ENCODE measurements at regions of chr2 and their contacts with region 1.

Region 1: GRCh38 chr2:72603481-72603880 is 222.4 kb downstream of the EXOC6B start:
- DNase-seq: no peak
- H3K4me3 ChIP-seq: no peak overlapping the region
- H3K27ac ChIP-seq: no peak overlapping the region
- H3K27me3 ChIP-seq: no peaks in the 10 kb centered on the region
- CTCF ChIP-seq: no peak

Region 2: DNA sequence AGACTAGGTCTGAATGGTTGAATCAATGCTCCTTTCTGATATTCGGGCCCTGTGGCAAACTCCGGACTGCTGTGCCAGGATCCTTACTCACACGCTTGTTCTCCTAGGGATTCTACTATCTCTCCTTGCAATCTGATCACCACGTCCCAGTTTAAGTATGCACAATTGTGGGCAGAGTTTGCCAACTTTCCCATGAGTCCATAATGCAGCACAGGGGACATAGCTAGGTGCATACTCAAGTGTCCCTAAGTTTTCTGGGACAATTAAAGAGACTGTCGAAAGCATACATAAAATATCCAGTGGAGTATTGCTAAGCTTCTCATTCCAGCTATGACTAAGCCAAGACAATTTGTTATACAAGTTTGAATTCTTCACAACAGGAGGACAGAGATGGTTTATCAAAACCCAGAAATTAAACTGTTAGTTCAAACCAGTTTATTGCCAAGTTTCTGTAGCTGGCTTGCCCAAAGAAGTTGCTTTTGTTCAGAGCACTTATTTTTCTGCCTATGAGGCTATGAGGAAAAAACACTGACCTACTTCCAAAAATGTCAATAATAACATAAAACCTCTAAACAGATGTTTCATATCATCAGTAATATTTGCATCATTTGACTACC is 86.2 kb after region 1 on chr2:
- intact Hi-C with region 1: loop called in 1 of 2 experiments (anchors 10 kb)
- DNase-seq: no peak
- H3K4me3 ChIP-seq: no peak overlapping the region
- H3K27ac ChIP-seq: no peak overlapping the region
- H3K27me3 ChIP-seq: no peaks in the 10 kb centered on the region
- CTCF ChIP-seq: no peak

Measured in dorsolateral prefrontal cortex (tissue), 120 donors.